Lower leg skin (tissue), 4 donors: ENCODE measurements at regions of chr2 and their contacts with region 1.

Region 1: DNA sequence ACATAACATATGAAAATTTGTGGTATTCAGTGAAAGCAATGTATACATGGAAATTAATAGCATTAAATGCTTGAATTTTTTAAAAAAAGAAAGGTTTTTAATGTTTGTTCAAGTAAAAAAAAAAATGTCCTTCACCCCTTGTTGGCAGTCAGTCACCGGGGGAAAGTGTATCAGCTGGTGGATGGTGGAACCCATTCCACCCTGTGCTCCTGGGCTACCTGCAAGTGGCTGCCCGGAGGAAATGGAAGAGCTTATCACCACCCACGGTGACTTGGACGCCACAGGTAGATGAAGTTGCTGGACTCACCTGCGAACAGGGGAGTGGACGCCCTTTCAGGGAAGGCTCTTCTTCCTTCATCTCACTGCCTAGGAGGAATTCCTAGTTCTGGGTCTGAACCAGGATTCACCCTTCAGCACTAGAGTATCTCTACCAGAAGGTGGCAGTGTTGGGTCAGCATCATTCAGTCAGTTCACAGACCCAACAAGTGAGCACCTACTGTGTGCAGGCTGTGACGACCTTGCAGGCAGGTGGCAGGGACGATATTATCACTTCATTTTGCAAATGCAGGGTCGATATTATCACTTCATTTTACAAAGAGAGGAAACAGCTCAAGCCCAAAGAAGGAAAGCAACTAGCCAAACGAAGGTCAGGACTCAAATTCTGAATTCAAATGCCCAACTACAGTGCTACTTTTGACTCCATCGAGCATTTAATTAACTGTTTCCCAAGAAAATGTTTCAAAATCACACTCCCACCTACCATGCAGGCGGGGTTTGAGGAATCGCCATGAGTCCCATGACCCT is 35.8 kb downstream of the CIB4 start:
- DNase-seq: peak; percentile 26 to 80
- H3K4me3 ChIP-seq: no peak overlapping the region
- CTCF ChIP-seq: no peak
- POLR2A ChIP-seq: no peak

Region 2: DNA sequence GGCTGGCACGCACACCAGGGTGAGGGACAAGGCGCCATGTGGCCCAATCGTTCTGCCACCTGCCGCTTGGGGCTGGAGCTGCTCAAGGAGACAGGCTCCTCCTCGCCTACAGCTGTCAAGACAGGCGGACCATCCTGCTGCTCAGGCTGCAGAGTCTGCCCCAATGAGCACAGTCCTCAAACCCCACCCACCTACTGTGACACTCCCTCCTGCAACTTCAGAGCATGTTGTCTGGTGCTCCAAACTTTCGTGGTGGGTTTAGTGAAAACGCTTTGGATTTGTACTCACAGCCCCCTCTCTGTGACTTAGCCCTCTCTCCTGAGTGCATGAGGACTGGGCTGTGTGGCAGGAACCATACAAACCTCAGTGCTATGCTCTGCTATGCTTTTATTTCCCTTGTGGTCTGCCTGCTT is 135.5 kb after region 1 on chr2:
- intact Hi-C with region 1: loop called (anchors 5 kb)
- DNase-seq: no peak
- H3K4me3 ChIP-seq: no peak overlapping the region
- CTCF ChIP-seq: no peak
- POLR2A ChIP-seq: no peak